ENCODE measurements at regions of chr3 and their contacts with region 1.

Region 1: DNA sequence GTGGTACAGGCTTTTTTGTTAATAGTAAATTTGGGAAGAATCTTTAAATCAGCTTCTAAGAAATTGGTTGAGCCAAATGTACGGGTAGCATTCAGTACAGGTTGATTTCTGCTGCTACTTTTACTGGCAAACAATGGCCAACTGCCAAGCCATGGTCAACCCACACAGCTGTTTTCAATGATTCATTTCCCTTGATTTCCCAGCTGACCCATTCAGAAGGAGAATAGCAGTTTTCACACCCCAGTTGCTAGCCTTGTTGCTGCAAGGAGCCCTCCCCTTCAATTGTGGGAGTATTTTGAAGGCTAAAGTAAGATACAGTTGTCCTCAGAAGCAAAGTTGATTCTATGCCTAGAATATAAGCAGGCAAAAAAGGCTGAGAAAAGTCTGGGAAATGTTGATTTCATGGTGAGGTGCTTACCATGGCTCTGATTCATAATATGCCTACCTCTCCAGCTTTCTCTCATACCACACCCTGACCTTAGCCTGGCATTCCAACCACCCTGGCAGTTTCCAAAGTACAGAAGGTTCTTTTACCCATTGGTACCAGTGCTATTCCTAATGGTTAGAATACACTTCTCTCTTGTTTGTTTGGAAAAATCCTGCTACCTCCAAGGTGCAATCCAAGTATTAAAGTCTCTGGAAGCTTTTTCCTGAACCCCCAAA is 320.3 kb upstream of the TGFBR2 start:
- DNase-seq: peak; percentile 99
- H3K4me3 ChIP-seq: no peak overlapping the region
- H3K27ac ChIP-seq: peak overlapping the region; percentile 60
- H3K4me1 ChIP-seq: peaks cover 70% of the 10 kb centered on the region
- H3K27me3 ChIP-seq: no peaks in the 10 kb centered on the region
- CTCF ChIP-seq: no peak
- POLR2A ChIP-seq: peak; percentile 61

Region 2: GRCh38 chr3:30112902-30113484 is 173.1 kb before region 1 on chr3:
- CTCF ChIA-PET with region 1: interaction called, 6 read pairs
- POLR2A ChIA-PET with region 1: no interaction called
- dilution Hi-C with region 1: no loop called
- intact Hi-C with region 1: loop called (anchors 2 kb)
- DNase-seq: peak; percentile 76
- H3K4me3 ChIP-seq: no peak overlapping the region
- H3K27ac ChIP-seq: no peak overlapping the region
- H3K4me1 ChIP-seq: no peaks in the 10 kb centered on the region
- H3K27me3 ChIP-seq: peaks cover 0 to 2% of the 10 kb centered on the region in 2 experiments
- CTCF ChIP-seq: peak; percentile 26 to 37
- POLR2A ChIP-seq: no peak

Region 3: DNA sequence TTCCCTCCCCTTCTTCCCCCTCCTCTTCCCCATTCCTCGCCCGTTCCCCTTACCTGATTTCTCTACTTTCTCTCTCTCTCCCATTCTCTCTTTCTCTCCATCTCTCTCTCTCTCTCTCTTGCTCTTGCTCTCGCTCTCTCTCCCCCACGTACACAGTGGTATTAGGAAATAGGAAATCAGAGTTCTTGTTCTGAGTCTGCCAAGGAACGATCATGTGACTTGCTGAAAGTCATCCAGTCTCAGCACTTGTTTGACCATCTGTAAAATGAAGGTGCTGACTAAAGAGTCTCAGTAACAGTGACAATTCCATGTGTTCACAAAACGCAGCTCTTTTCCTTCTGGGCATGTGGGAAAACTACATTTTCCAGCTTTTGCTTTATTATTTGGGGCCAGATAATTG is 124.8 kb before region 1 on chr3:
- CTCF ChIA-PET with region 1: no interaction called
- POLR2A ChIA-PET with region 1: no interaction called
- dilution Hi-C with region 1: no loop called
- intact Hi-C with region 1: loop called (anchors 2 kb)
- DNase-seq: peak; percentile 27
- H3K4me3 ChIP-seq: no peak overlapping the region
- H3K27ac ChIP-seq: no peak overlapping the region
- H3K4me1 ChIP-seq: peaks cover 30% of the 10 kb centered on the region
- H3K27me3 ChIP-seq: peaks cover 0 to 7% of the 10 kb centered on the region in 2 experiments
- CTCF ChIP-seq: no peak
- POLR2A ChIP-seq: no peak

Region 4: GRCh38 chr3:30227571-30228301 is 58.4 kb before region 1 on chr3:
- CTCF ChIA-PET with region 1: interaction called, 4 read pairs
- POLR2A ChIA-PET with region 1: no interaction called
- dilution Hi-C with region 1: no loop called
- intact Hi-C with region 1: loop called (anchors 1 kb)
- DNase-seq: peak; percentile 90
- H3K4me3 ChIP-seq: no peak overlapping the region
- H3K27ac ChIP-seq: peak overlapping the region; percentile 67
- H3K4me1 ChIP-seq: peaks cover 26% of the 10 kb centered on the region
- H3K27me3 ChIP-seq: no peaks in the 10 kb centered on the region
- CTCF ChIP-seq: no peak
- POLR2A ChIP-seq: no peak

Region 5: DNA sequence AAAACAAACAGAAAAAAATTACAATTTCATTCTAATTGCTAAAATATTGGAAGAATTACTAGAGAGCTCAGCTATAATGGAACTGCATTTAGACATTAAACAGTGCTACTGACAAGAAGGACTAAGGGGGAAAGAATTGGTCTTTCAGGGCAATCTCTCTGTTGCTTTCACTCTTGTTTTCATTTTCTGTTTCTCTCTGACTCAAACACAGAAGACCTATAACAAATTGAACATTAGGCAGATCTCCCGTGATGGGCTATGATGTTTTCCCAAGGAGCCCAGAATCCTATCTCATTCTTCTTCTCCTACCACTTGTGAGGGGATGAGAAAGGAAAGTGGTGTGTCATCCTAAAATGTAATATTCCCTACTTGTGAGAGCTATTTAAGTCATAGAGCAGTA is 37.7 kb before region 1 on chr3:
- CTCF ChIA-PET with region 1: interaction called, 3 read pairs
- POLR2A ChIA-PET with region 1: no interaction called
- dilution Hi-C with region 1: no loop called
- intact Hi-C with region 1: loop called (anchors 5 kb)
- DNase-seq: no peak
- H3K4me3 ChIP-seq: no peak overlapping the region
- H3K27ac ChIP-seq: no peak overlapping the region
- H3K4me1 ChIP-seq: no peaks in the 10 kb centered on the region
- H3K27me3 ChIP-seq: no peaks in the 10 kb centered on the region
- CTCF ChIP-seq: no peak
- POLR2A ChIP-seq: no peak

Region 6: DNA sequence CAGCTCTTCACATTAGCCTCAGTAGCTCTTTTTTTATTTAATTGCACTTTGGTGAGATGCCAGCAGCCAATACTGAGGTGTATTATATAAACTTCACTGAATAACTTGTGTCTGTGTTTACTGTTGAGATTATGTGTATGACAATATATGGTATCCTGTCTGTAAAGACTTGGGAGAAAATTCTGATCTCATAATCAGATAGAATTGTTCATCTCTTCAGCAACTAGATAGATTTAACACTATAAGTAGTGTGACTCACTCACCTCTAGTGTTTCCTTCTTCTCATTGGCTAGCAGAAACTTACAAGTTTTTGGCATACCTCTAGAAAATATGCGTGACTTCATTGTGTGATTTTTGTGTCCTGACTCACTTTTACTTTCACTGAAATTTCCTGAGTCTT is 252.6 kb after region 1 on chr3:
- CTCF ChIA-PET with region 1: no interaction called
- POLR2A ChIA-PET with region 1: no interaction called
- dilution Hi-C with region 1: no loop called
- intact Hi-C with region 1: loop called (anchors 1 kb)
- DNase-seq: peak; percentile 93
- H3K4me3 ChIP-seq: no peak overlapping the region
- H3K27ac ChIP-seq: peak overlapping the region; percentile 97
- H3K4me1 ChIP-seq: peaks cover 26% of the 10 kb centered on the region
- H3K27me3 ChIP-seq: no peaks in the 10 kb centered on the region
- CTCF ChIP-seq: no peak
- POLR2A ChIP-seq: no peak

Region 7: DNA sequence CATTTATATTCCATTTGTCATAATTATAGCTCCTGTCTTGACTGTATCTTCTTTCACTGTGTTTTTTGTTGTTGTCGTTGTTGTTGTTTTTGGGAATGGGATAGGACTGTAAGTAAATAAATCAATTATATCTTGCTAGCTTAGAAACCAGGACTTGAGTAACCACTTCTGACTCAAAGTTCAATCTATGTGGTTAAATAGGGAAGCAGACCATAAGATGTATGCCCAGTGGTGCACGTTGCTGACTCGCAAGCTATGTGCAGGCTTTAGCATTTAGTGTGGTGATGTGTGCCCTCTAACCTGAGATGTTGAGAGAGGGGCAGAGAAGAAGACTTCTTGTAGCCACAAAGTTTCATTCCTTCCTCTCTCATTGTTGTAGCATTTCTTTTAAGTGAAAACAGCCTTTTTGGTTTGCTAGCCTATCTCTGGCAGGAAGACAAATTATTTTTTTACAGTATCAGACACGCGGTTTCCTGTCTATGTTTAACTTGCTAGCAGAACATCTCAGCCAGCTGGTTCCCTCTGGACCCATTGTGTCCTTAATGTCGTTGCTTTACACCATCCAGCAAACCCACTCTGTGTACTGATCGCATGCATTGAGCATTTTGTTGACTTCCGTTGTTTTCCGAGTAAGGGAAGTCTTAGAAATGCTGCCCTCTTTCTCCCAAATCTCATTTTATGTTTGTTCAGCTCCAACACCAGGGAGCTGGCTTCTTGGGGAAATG is 372.4 kb after region 1 on chr3:
- CTCF ChIA-PET with region 1: no interaction called
- POLR2A ChIA-PET with region 1: no interaction called
- dilution Hi-C with region 1: no loop called
- intact Hi-C with region 1: loop called (anchors 1 kb)
- DNase-seq: peak; percentile 95
- H3K4me3 ChIP-seq: no peak overlapping the region
- H3K27ac ChIP-seq: peak overlapping the region; percentile 98
- H3K4me1 ChIP-seq: peaks cover 100% of the 10 kb centered on the region
- H3K27me3 ChIP-seq: no peaks in the 10 kb centered on the region
- CTCF ChIP-seq: no peak
- POLR2A ChIP-seq: peak; percentile 68